Naive thymus-derived CD8-positive, alpha-beta T cell (primary cell): ENCODE measurements at regions of chr2 and their contacts with region 1.

Region 1: DNA sequence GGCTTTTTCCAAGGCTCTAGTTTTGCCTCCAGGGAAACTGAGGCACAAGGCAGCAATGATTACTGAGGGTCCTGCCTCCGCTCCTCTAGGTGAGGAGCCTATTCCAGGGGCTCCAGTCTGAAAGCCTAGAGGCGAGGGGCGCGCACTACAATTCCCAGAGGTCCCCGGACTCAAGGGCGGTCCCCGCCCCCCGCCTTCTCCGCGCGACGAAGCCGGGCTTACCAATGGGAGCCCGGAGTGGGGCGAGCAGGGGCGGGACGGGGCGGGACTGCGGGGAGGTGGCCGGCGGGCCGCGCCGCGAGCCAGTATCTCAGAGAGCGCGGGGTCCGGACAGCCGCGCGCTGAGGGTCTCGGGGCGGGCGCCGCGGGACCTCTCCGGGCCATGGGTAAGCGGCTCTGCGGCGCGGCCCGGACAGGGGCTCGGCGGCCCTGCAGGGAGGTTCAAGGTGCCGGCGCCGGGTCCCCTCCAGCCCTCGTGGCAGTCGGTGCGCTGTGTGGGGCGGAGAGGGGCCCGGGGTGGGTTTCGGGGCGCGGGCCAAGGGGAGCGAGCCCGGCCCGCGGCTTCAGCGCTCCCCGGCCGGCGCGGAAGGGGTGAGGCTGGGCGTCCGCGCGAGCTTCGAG is at the start of gene ARID5A:
- DNase-seq: peak; percentile 81 to 96 (median 89)
- ATAC-seq: peak; percentile 47 to 51
- H3K4me3 Mint-ChIP-seq: peak within 1 kb of the TSS; percentile 92 to 99 (median 96)
- H3K27ac Mint-ChIP-seq: peak within 1 kb of the TSS; percentile 96 to 100 (median 100)
- H3K4me1 Mint-ChIP-seq: peaks cover 22 to 64% (median 55%) of the 10 kb centered on the region in 4 donors
- H3K27me3 Mint-ChIP-seq: no peaks in the 10 kb centered on the region
- polyA plus RNA-seq, gene ARID5A: 41.7 to 101 (median 55.2) TPM

Region 2: DNA sequence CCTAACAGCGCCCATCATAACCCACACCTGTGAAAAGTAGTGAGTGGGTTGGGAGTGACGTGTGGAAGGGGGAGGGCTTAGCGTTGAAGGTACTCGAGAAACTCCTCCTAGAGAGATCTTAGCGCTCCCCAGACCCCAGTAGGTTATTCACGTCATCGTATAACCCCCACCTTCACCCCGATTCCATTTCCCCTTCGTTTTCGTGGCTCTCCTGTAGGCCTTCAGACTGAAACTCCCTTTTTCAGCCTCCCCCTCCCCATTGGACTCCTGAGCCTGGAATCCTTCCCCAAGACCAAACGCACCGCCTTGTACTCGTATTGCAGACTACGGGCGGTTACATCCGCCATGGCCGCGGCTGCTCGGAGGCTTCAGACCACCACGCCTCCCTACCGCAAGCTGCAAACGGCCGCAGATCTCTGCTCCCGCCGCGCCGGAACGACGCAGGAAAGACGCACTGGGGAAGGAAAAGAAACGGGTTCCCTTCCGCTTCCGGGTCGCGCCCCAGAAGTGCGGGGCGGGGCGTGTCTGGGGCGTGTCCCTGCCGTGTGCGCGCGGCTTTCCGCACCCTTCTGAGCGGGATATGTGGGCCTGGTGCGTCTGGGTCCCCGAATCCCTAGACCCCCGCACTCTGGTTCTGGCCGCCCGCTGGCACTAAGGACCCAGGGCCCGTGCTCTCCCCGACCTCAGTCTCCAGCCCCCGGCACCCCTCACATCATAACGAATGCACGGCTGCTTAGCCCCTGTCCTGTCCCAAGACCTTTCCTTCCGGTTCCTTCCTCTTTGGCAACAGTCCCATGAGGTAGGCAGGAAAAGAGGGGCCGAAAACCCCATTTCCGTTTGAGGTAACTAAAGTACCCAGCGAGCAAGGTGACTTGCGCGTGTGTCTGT is 231.2 kb before region 1 on chr2 and contains the start of gene SNRNP200:
- POLR2A ChIA-PET with region 1: interaction called, 15 read pairs
- DNase-seq: peak; percentile 85 to 94 (median 90)
- ATAC-seq: peak; percentile 87 to 89
- H3K4me3 Mint-ChIP-seq: peak within 1 kb of the TSS; percentile 94 to 100 (median 99)
- H3K27ac Mint-ChIP-seq: peak within 1 kb of the TSS; percentile 98 to 100 (median 100)
- H3K4me1 Mint-ChIP-seq: peaks cover 33 to 62% (median 57%) of the 10 kb centered on the region in 4 donors
- H3K27me3 Mint-ChIP-seq: no peaks in the 10 kb centered on the region
- polyA plus RNA-seq, gene SNRNP200: 61.8 to 111 (median 90.3) TPM

Region 3: GRCh38 chr2:96320728-96321622 is 215.6 kb before region 1 on chr2:
- POLR2A ChIA-PET with region 1: interaction called, 14 read pairs
- DNase-seq: peak in 1 of 10 donors; percentile 9
- ATAC-seq: peak; percentile 26 to 35
- H3K4me3 Mint-ChIP-seq: peak overlapping the region; percentile 75 to 94 (median 90)
- H3K27ac Mint-ChIP-seq: peak overlapping the region; percentile 50 to 87 (median 74)
- H3K4me1 Mint-ChIP-seq: peaks cover 25 to 66% (median 60%) of the 10 kb centered on the region in 4 donors
- H3K27me3 Mint-ChIP-seq: no peaks in the 10 kb centered on the region

Region 4: DNA sequence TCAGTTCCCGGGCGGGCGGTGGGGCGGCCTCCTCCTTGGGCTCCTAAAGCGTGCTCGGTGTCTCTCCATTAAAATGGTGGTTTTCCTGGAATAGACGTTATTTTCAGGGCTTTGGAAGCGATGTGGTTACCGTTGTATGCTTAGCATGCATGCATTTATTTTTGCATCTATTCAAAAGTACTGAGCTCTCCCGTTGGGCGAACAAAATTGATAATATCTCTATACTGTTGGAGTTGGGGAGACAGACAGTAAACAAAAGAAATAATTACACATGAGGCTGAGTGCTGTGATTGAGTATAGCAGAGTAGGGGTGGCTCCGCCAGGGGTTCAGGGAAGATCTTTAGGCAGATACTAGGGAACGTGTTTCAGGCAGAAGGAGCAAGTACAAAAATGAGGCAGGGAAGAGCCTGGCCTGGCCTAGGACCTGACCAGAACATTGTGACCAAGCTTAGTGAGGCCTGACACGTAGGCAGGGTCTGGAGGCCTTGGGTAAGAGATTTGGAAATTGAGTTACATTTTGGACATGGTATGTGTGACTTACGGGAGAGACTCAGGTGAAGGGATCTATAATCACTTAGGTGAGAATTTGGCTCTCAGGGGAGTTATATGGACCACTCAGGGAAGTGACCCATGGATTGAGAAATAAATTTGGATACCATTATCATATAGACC is 200.3 kb before region 1 on chr2:
- POLR2A ChIA-PET with region 1: interaction called, 11 read pairs
- DNase-seq: no peak
- ATAC-seq: no peak
- H3K4me3 Mint-ChIP-seq: peak overlapping the region; percentile 72 to 92 (median 85)
- H3K27ac Mint-ChIP-seq: peak overlapping the region in 9 of 10 donors; percentile 7 to 79 (median 62)
- H3K4me1 Mint-ChIP-seq: peaks cover 9 to 33% (median 22%) of the 10 kb centered on the region in 4 donors
- H3K27me3 Mint-ChIP-seq: no peaks in the 10 kb centered on the region

Region 5: DNA sequence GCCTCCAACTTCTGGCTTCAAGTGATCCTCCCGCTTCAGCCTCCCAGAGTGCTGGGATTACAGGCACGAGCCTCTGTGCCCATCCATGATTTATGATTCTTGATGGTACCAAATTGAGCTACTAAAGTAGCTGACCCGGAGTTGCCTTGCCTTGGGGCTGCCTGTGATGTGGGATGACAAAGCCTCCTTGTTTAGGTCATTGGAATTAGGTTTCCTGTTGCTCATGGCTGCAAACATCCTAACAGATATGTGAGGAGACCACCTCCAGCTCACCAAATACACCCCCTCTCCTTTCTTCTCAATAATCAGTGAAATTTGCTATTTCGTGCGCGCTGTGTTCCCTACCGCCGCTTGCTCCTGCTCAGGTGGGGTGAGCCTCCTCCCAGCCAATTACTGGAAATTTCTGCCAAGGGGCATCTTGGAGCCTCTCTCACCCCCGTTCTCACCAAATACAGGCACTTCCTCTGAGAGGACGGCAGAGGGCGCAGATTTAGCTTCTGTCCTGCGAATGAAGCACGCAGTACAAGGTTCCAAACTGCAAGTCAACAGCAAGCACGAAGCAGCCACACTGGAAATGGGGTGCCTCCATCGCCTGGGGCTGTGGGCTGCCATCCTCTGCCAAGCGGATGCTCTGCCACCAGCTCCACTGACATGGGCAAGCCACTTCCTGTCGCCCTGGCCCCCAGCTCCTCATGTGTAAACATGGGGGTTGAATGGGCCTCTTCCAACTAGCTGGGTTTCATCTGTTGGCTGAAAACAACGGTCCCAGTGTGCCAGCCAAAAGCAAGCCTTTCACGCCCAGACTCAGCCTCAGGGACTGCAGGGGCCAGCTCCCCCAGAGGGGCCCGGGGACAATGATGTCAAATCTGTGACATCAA is 129.3 kb before region 1 on chr2:
- POLR2A ChIA-PET with region 1: interaction called, 47 read pairs
- DNase-seq: peak; percentile 53 to 94 (median 85)
- ATAC-seq: peak; percentile 94 to 96
- H3K4me3 Mint-ChIP-seq: peak overlapping the region; percentile 64 to 95 (median 88)
- H3K27ac Mint-ChIP-seq: peak overlapping the region; percentile 92 to 99 (median 98)
- H3K4me1 Mint-ChIP-seq: peaks cover 20 to 65% (median 49%) of the 10 kb centered on the region in 4 donors
- H3K27me3 Mint-ChIP-seq: no peaks in the 10 kb centered on the region

Region 6: GRCh38 chr2:96554293-96555145 is 18.0 kb after region 1 on chr2:
- POLR2A ChIA-PET with region 1: interaction called, 123 read pairs
- DNase-seq: peak; percentile 54 to 88 (median 72)
- ATAC-seq: peak; percentile 56 to 66
- H3K4me3 Mint-ChIP-seq: peak overlapping the region in 5 of 10 donors; percentile 39 to 48 (median 41)
- H3K27ac Mint-ChIP-seq: peak overlapping the region; percentile 43 to 93 (median 80)
- H3K4me1 Mint-ChIP-seq: peaks cover 6 to 29% (median 19%) of the 10 kb centered on the region in 4 donors
- H3K27me3 Mint-ChIP-seq: no peaks in the 10 kb centered on the region

Region 7: GRCh38 chr2:96638144-96639121 is 101.9 kb after region 1 on chr2 and contains the start of gene KANSL3:
- POLR2A ChIA-PET with region 1: interaction called, 11 read pairs
- DNase-seq: peak; percentile 75 to 94 (median 86)
- ATAC-seq: peak; percentile 76 to 77
- H3K4me3 Mint-ChIP-seq: peak within 1 kb of the TSS; percentile 79 to 97 (median 94)
- H3K27ac Mint-ChIP-seq: peak within 1 kb of the TSS; percentile 86 to 97 (median 94)
- H3K4me1 Mint-ChIP-seq: peaks cover 17 to 44% (median 37%) of the 10 kb centered on the region in 4 donors
- H3K27me3 Mint-ChIP-seq: peaks cover 0 to 2% (median 0%) of the 10 kb centered on the region in 5 donors
- polyA plus RNA-seq, gene KANSL3: 8.3 to 18.2 (median 11.4) TPM